Heart right ventricle (tissue), 16 donors: ENCODE measurements at regions of chr7 and their contacts with region 1.

Region 1: GRCh38 chr7:47266131-47266706 is 315.7 kb downstream of the TNS3 start:
- DNase-seq: peak; percentile 48 to 64
- ATAC-seq: peak; percentile 77 to 89 (median 83)
- H3K4me3 ChIP-seq: no peak overlapping the region
- H3K27ac ChIP-seq: peak overlapping the region in 1 of 10 donors; percentile 13
- H3K4me1 ChIP-seq: peaks cover 0 to 14% (median 4%) of the 10 kb centered on the region in 9 donors
- H3K27me3 ChIP-seq: no peaks in the 10 kb centered on the region
- CTCF ChIP-seq: peak; percentile 81 to 97 (median 92)

Region 2: GRCh38 chr7:47345857-47346645 is 79.8 kb after region 1 on chr7:
- intact Hi-C with region 1: loop called in 1 of 10 experiments (anchors 5 kb)
- DNase-seq: no peak
- ATAC-seq: no peak
- H3K4me3 ChIP-seq: no peak overlapping the region
- H3K27ac ChIP-seq: no peak overlapping the region
- H3K4me1 ChIP-seq: peaks cover 0 to 10% (median 6%) of the 10 kb centered on the region in 9 donors
- H3K27me3 ChIP-seq: no peaks in the 10 kb centered on the region
- CTCF ChIP-seq: no peak

Region 3: DNA sequence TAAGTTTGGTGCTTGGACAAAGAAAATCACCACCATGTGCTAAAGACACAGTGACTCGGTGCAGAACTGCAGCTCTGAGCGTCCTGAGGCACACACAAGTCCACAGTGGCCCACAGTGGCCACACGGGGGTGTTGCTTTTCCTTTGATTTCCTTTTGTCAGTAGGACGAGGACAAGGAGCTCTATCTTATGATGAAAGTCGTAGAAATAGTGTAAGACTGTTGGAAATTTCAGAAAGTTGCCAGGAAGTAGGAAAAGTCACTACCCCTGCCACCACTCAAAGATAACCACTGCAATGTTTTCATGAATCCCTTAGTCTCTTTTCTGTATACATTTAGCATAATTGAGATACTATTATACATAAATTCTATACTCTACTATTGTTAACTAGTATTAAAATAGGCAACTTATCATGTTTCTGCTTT is 169.7 kb after region 1 on chr7:
- intact Hi-C with region 1: loop called in 7 of 10 experiments (anchors 5 to 10 kb)
- DNase-seq: peak; percentile 68 to 74
- ATAC-seq: peak; percentile 74 to 91 (median 88)
- H3K4me3 ChIP-seq: no peak overlapping the region
- H3K27ac ChIP-seq: no peak overlapping the region
- H3K4me1 ChIP-seq: peaks cover 0 to 10% (median 0%) of the 10 kb centered on the region in 9 donors
- H3K27me3 ChIP-seq: no peaks in the 10 kb centered on the region
- CTCF ChIP-seq: peak; percentile 46 to 87 (median 78)

Region 4: GRCh38 chr7:47818796-47819606 is 552.8 kb after region 1 on chr7:
- intact Hi-C with region 1: loop called (anchors 1 to 5 kb)
- DNase-seq: peak; percentile 54 to 62
- ATAC-seq: peak in 6 of 8 donors; percentile 65 to 81 (median 71)
- H3K4me3 ChIP-seq: no peak overlapping the region
- H3K27ac ChIP-seq: no peak overlapping the region
- H3K4me1 ChIP-seq: peaks cover 0 to 20% (median 14%) of the 10 kb centered on the region in 9 donors
- H3K27me3 ChIP-seq: no peaks in the 10 kb centered on the region
- CTCF ChIP-seq: peak; percentile 71 to 99 (median 93)